ENCODE measurements at regions of chr2 and their contacts with region 1.

Region 1: GRCh38 chr2:177604271-177605065 is 211.9 kb downstream of the AGPS start:
- DNase-seq: no peak
- H3K4me3 Mint-ChIP-seq: no peak overlapping the region
- H3K27ac Mint-ChIP-seq: no peak overlapping the region
- H3K4me1 Mint-ChIP-seq: no peaks in the 10 kb centered on the region
- H3K27me3 Mint-ChIP-seq: peaks cover 3% of the 10 kb centered on the region

Region 2: DNA sequence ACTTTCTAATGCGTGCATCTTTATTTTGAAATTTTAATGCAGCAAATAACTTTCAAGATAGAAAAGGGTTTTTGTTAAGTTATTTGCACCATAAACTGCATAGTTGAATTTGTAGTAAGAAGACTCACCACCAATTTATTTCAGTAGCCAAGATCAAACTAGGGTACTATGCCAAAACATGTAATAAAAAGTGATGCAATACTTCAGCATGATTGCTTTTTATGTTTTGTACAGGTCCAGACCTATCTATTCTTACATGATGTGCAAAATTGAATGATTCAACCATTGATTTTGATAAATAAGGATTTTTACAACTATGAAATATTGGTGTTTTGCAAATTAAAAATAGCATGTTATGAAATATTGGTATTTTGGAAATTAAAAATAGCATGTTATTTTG is 185.2 kb before region 1 on chr2:
- CTCF ChIA-PET with region 1: no interaction called
- intact Hi-C with region 1: loop called (anchors 1 kb)
- DNase-seq: no peak
- H3K4me3 Mint-ChIP-seq: no peak overlapping the region
- H3K27ac Mint-ChIP-seq: peak overlapping the region; percentile 63
- H3K4me1 Mint-ChIP-seq: peaks cover 37% of the 10 kb centered on the region
- H3K27me3 Mint-ChIP-seq: no peaks in the 10 kb centered on the region

Region 3: GRCh38 chr2:177489719-177490301 is 114.7 kb before region 1 on chr2:
- CTCF ChIA-PET with region 1: interaction called, 4 read pairs
- intact Hi-C with region 1: loop called (anchors 5 kb)
- DNase-seq: no peak
- H3K4me3 Mint-ChIP-seq: no peak overlapping the region
- H3K27ac Mint-ChIP-seq: no peak overlapping the region
- H3K4me1 Mint-ChIP-seq: no peaks in the 10 kb centered on the region
- H3K27me3 Mint-ChIP-seq: no peaks in the 10 kb centered on the region

Measured in activated naive CD4-positive, alpha-beta T cell treated with anti-CD3 and anti-CD28 coated beads for 36 hours (primary cell).